Endothelial cell of umbilical vein (primary cell): ENCODE measurements at regions of chr18 and their contacts with region 1.

Region 1: GRCh38 chr18:49728542-49728941 is 84.8 kb downstream of the ACAA2 start:
- DNase-seq: peak; percentile 54
- H3K4me3 ChIP-seq: no peak overlapping the region
- H3K27ac ChIP-seq: no peak overlapping the region
- H3K4me1 ChIP-seq: peaks cover 33% of the 10 kb centered on the region
- H3K27me3 ChIP-seq: no peaks in the 10 kb centered on the region
- CTCF ChIP-seq: peak; percentile 84 to 87
- POLR2A ChIP-seq: no peak

Region 2: DNA sequence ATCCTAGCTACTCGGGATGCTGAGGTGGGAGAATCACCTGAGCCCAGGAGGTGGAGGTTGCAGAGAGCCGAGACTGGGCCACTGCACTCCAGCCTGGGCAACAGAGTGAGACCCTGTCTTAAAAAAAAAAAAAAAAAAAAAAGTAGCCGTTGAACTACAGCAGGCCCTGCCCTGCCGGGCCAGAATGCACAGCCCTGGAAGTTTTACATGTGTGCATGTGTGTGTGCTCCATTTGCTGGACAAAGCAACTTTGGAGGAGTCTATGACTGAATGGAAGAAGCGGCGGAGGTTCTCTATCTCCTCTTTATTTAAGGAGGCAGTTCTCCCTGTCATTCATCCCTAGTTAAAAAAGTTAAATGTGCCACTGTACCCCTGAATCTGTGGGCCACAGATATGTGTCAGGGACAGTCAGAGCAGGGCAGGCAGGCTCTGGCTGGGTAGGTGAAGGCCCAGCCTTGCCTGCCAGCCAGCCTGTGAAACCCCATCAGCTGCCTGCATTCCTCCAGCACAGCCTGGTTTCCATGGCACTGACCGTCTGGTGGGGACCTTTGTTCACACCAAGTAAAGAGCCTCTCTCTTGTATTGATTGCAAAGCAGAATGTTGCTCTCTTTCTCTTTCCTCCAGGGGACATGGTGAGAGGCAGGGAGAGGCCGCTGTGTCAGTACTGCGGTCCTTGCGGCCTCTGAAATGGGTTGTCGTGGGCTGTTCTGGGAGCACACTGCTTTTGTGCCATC is 155.8 kb before region 1 on chr18:
- CTCF ChIA-PET with region 1: no interaction called
- POLR2A ChIA-PET with region 1: interaction called, 10 read pairs
- dilution Hi-C with region 1: no loop called
- intact Hi-C with region 1: no loop called
- DNase-seq: no peak
- H3K4me3 ChIP-seq: no peak overlapping the region
- H3K27ac ChIP-seq: no peak overlapping the region
- H3K4me1 ChIP-seq: no peaks in the 10 kb centered on the region
- H3K27me3 ChIP-seq: no peaks in the 10 kb centered on the region
- CTCF ChIP-seq: no peak
- POLR2A ChIP-seq: no peak

Region 3: GRCh38 chr18:49690307-49690706 is 38.2 kb before region 1 on chr18:
- CTCF ChIA-PET with region 1: interaction called, 9 read pairs
- POLR2A ChIA-PET with region 1: interaction called, 3 read pairs
- dilution Hi-C with region 1: no loop called
- intact Hi-C with region 1: loop called (anchors 1 kb)
- DNase-seq: peak; percentile 78
- H3K4me3 ChIP-seq: peak overlapping the region in 1 of 3 experiments; percentile 34
- H3K27ac ChIP-seq: peak overlapping the region; percentile 97
- H3K4me1 ChIP-seq: peaks cover 48% of the 10 kb centered on the region
- H3K27me3 ChIP-seq: no peaks in the 10 kb centered on the region
- CTCF ChIP-seq: no peak
- POLR2A ChIP-seq: no peak

Region 4: GRCh38 chr18:49813319-49814146 is 85.0 kb after region 1 on chr18 and contains the start of gene ACAA2:
- CTCF ChIA-PET with region 1: no interaction called
- POLR2A ChIA-PET with region 1: no interaction called
- dilution Hi-C with region 1: no loop called
- intact Hi-C with region 1: loop called (anchors 5 kb)
- DNase-seq: peak; percentile 83
- H3K4me3 ChIP-seq: peak within 1 kb of the TSS; percentile 48 to 75 (median 64)
- H3K27ac ChIP-seq: peak within 1 kb of the TSS; percentile 94
- H3K4me1 ChIP-seq: peaks cover 12% of the 10 kb centered on the region
- H3K27me3 ChIP-seq: no peaks in the 10 kb centered on the region
- CTCF ChIP-seq: no peak
- POLR2A ChIP-seq: peak; percentile 93
- total RNA-seq, gene ACAA2: 44.4 and 44.9 TPM in 2 replicates

Region 5: GRCh38 chr18:49827996-49828395 is 99.5 kb after region 1 on chr18:
- CTCF ChIA-PET with region 1: no interaction called
- POLR2A ChIA-PET with region 1: no interaction called
- dilution Hi-C with region 1: no loop called
- intact Hi-C with region 1: no loop called
- DNase-seq: no peak
- H3K4me3 ChIP-seq: no peak overlapping the region
- H3K27ac ChIP-seq: no peak overlapping the region
- H3K4me1 ChIP-seq: no peaks in the 10 kb centered on the region
- H3K27me3 ChIP-seq: no peaks in the 10 kb centered on the region
- CTCF ChIP-seq: no peak
- POLR2A ChIP-seq: no peak